ENCODE measurements at regions of chr9 and their contacts with region 1.

Region 1: GRCh38 chr9:106862825-106863720 is at the start of gene ZNF462:
- DNase-seq: peak; percentile 51 to 68 (median 61)
- ATAC-seq: peak; percentile 43 to 68 (median 56)
- H3K4me3 ChIP-seq: peak within 1 kb of the TSS; percentile 58 to 96 (median 78)
- H3K27ac ChIP-seq: peak within 1 kb of the TSS; percentile 81 to 95 (median 88)
- H3K4me1 ChIP-seq: peaks cover 1 to 33% (median 18%) of the 10 kb centered on the region in 12 donors
- H3K27me3 ChIP-seq: peaks cover 0 to 37% (median 0%) of the 10 kb centered on the region in 9 donors
- CTCF ChIP-seq: peak in 8 of 12 donors; percentile 5 to 62 (median 36)
- POLR2A ChIP-seq: no peak
- total RNA-seq, gene ZNF462: 16.8 to 51.3 (median 31.5) TPM

Region 2: DNA sequence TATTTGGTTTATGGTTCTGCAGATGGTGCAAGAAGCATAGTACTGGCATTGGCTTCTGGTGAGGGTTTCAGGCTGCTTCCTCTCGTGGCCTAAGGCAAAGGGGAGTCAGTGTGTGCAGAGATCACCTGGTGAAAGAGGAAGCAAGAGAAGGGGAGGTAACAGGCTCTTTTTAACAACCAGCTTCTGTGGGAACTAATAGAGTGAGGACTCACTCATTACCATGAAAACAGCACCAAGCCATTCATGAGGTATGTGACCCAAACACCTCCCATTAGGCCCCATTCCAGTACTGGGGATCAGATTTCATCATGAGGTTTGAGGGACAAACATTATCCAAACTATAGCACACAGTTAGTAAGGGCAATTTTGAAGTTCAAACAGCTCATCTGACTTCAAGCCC is 905.2 kb before region 1 on chr9:
- intact Hi-C with region 1: loop called in 1 of 10 experiments (anchors 5 kb)
- DNase-seq: no peak
- ATAC-seq: no peak
- H3K4me3 ChIP-seq: no peak overlapping the region
- H3K27ac ChIP-seq: no peak overlapping the region
- H3K4me1 ChIP-seq: no peaks in the 10 kb centered on the region
- H3K27me3 ChIP-seq: no peaks in the 10 kb centered on the region
- CTCF ChIP-seq: no peak
- POLR2A ChIP-seq: no peak

Region 3: GRCh38 chr9:106648799-106649198 is 214.3 kb before region 1 on chr9:
- intact Hi-C with region 1: loop called in 4 of 10 experiments (anchors 5 to 10 kb)
- DNase-seq: no peak
- ATAC-seq: no peak
- H3K4me3 ChIP-seq: no peak overlapping the region
- H3K27ac ChIP-seq: no peak overlapping the region
- H3K4me1 ChIP-seq: no peaks in the 10 kb centered on the region
- H3K27me3 ChIP-seq: no peaks in the 10 kb centered on the region
- CTCF ChIP-seq: peak in 8 of 12 donors; percentile 6 to 50 (median 34)
- POLR2A ChIP-seq: no peak

Region 4: GRCh38 chr9:106726070-106726815 is 136.8 kb before region 1 on chr9:
- intact Hi-C with region 1: loop called in 1 of 10 experiments (anchors 10 kb)
- DNase-seq: peak in 3 of 5 donors; percentile 15 to 45 (median 44)
- ATAC-seq: peak; percentile 83 to 92 (median 88)
- H3K4me3 ChIP-seq: no peak overlapping the region
- H3K27ac ChIP-seq: peak overlapping the region in 3 of 12 donors; percentile 30 to 52 (median 49)
- H3K4me1 ChIP-seq: peaks cover 0 to 42% (median 6%) of the 10 kb centered on the region in 12 donors
- H3K27me3 ChIP-seq: no peaks in the 10 kb centered on the region
- CTCF ChIP-seq: no peak
- POLR2A ChIP-seq: no peak

Region 5: DNA sequence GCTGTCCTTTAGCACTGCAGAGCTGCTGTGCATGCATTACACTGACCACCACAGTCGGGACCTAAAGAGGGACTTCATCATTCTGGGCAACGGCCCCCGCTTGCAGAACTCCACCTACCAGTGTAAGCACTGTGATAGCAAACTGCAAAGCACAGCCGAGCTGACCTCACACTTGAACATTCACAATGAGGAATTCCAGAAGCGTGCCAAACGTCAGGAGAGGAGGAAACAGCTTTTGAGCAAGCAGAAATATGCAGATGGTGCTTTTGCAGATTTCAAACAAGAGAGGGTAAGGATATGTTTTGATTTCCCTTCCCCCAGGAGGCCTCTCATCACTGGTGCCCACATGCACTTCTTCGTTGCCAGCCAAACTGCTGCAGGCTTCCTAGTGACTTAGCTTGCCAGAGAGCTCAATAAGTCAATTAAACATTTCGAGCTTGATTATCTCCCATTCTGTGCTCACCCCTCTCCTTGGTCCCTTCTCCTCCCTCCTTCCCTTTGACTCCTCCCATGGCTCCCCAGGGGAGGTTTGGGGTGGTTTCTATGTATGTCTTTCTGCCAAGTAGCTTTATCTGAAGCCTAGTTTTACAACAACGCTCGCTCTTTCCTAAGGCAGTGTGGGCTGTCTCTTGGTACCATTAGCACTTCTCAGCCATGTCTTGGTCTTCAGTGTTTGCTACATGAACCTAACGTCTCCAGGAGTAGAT is 66.6 kb after region 1 on chr9:
- intact Hi-C with region 1: loop called in 5 of 10 experiments (anchors 5 to 10 kb)
- DNase-seq: peak in 4 of 5 donors; percentile 37 to 66 (median 54)
- ATAC-seq: peak; percentile 65 to 86 (median 83)
- H3K4me3 ChIP-seq: peak overlapping the region in 2 of 12 donors; percentile 1 to 3
- H3K27ac ChIP-seq: peak overlapping the region in 9 of 12 donors; percentile 32 to 71 (median 43)
- H3K4me1 ChIP-seq: peaks cover 0 to 29% (median 17%) of the 10 kb centered on the region in 12 donors
- H3K27me3 ChIP-seq: no peaks in the 10 kb centered on the region
- CTCF ChIP-seq: no peak
- POLR2A ChIP-seq: no peak

Region 6: GRCh38 chr9:107033966-107034365 is 170.9 kb after region 1 on chr9:
- intact Hi-C with region 1: no loop called
- DNase-seq: no peak
- ATAC-seq: no peak
- H3K4me3 ChIP-seq: no peak overlapping the region
- H3K27ac ChIP-seq: no peak overlapping the region
- H3K4me1 ChIP-seq: no peaks in the 10 kb centered on the region
- H3K27me3 ChIP-seq: no peaks in the 10 kb centered on the region
- CTCF ChIP-seq: no peak
- POLR2A ChIP-seq: no peak

Region 7: GRCh38 chr9:107044872-107045271 is 181.8 kb after region 1 on chr9:
- intact Hi-C with region 1: loop called in 1 of 10 experiments (anchors 5 kb)
- DNase-seq: no peak
- ATAC-seq: no peak
- H3K4me3 ChIP-seq: no peak overlapping the region
- H3K27ac ChIP-seq: no peak overlapping the region
- H3K4me1 ChIP-seq: peaks cover 0 to 8% (median 0%) of the 10 kb centered on the region in 12 donors
- H3K27me3 ChIP-seq: no peaks in the 10 kb centered on the region
- CTCF ChIP-seq: peak in 2 of 12 donors; percentile 7 to 15
- POLR2A ChIP-seq: no peak